ENCODE measurements at regions of chr7 and their contacts with region 1.

Region 1: GRCh38 chr7:139645572-139646523 is 122.4 kb downstream of the CLEC2L start:
- H3K4me3 Mint-ChIP-seq: no peak overlapping the region
- H3K27ac Mint-ChIP-seq: no peak overlapping the region
- H3K4me1 Mint-ChIP-seq: peaks cover 52% of the 10 kb centered on the region
- H3K27me3 Mint-ChIP-seq: peaks cover 3% of the 10 kb centered on the region

Region 2: GRCh38 chr7:139696552-139696951 is 50.7 kb after region 1 on chr7:
- intact Hi-C with region 1: loop called (anchors 5 kb)
- H3K4me3 Mint-ChIP-seq: no peak overlapping the region
- H3K27ac Mint-ChIP-seq: peak overlapping the region; percentile 28
- H3K4me1 Mint-ChIP-seq: peaks cover 59% of the 10 kb centered on the region
- H3K27me3 Mint-ChIP-seq: no peaks in the 10 kb centered on the region

Region 3: DNA sequence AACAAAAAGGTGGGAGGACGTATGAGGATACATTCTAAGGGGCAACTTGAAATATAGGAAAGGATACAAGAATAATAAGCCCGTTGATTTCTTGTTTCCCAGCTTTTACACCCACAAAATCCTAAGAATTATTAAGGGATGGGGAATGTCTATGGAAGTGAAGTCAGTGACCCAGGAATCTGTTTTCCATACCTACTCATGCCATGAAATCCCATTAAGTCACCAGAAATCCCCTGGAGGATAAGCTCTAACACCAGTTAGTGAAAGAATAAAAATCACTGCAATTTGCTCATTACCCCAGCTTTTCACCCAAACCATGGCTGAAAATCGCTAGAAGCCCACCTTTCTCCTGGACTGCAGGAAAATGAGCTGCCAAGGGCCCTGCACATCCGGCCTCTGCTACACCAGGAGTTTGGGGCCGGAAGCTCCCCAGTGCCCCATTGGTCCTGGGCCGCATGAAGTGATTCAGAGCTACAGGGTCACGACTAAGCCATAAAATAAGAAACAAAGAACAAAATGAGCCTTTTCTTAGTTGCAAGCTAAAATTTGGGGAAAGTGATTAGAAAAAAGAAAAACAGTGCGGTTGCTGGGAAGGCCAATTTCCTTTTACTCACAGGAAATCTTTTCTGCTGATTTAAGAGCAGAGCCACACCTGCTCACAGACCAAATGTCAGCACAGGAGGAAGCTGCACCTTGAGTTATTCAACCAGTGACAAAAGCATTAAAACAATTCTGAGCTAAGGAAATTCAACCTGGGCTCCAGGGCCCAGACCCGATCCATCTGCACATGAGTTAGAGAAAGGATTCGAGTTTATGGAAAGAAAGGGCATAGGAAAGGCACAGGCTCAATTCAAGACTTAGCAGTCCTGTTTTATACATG is 91.6 kb after region 1 on chr7:
- intact Hi-C with region 1: no loop called
- H3K4me3 Mint-ChIP-seq: no peak overlapping the region
- H3K27ac Mint-ChIP-seq: no peak overlapping the region
- H3K4me1 Mint-ChIP-seq: peaks cover 42% of the 10 kb centered on the region
- H3K27me3 Mint-ChIP-seq: no peaks in the 10 kb centered on the region

Region 4: DNA sequence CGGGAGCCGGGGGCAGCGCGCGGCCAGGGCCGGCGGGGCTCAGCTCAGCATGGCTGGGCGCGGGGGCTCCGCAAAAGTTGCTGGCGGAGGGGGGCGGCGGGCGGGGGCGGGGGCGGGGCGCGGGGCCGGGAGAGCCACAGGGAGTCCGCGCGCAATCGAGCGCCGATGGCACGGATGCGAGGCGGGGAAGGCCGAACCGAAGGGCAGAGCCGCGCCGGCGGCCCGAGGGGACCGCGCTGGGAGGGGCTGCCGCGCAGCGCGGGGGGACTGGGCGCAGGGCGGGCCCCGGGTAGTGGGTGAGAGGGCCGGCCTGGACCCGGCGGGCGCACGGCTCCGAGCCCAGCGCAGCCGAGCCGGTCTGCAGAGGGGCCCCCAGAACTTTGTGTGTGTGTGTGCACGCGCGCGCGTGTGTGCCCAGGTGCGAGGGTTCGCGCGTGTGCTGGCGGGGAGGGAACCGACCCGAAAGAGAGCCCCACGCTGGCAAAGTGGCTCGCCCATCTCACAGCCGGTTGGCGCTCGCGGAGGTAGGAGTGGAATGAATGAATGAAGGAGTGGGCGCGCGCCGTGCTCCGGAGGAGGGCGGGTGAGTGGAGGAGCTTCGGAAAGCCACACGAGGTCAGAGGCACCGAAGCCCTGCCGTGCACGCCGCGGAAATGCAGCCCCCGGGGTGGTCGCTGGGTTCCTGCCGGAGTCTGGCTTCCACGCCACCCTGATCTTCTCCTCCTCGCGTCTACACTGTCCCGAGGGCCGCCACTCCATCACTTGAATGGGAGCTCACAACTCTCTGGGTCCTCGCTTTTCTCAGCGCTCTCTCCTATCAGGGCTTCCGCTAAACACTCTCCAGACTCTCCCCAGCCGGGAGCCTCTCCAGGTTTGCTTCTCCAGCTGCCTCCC is 132.3 kb after region 1 on chr7 and contains the start of gene HIPK2:
- intact Hi-C with region 1: loop called (anchors 2 kb)
- H3K4me3 Mint-ChIP-seq: peak within 1 kb of the TSS; percentile 97
- H3K27ac Mint-ChIP-seq: peak within 1 kb of the TSS; percentile 92
- H3K4me1 Mint-ChIP-seq: peaks cover 36% of the 10 kb centered on the region
- H3K27me3 Mint-ChIP-seq: peaks cover 28% of the 10 kb centered on the region

Region 5: DNA sequence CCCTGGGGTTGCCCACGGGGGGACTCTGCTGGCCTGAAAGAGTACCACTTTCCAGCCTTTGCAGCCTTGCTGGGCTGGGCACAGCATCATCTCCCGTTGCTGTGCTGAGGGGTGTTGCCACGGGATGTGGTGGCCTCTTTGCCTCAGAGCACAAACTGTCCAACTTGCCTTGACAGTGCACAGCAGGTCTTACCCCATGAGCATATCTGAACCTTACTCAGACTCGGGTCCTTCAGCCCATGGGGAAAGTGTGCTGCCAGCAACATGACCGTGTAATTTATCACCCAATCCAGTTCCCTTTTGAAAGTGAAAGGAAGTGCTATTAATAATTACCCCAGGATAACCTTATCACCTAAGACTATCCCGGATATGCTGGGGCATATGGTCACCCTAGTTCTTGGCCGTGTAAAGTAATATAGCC is 230.0 kb after region 1 on chr7:
- intact Hi-C with region 1: loop called (anchors 10 kb)
- H3K4me3 Mint-ChIP-seq: no peak overlapping the region
- H3K27ac Mint-ChIP-seq: no peak overlapping the region
- H3K4me1 Mint-ChIP-seq: peaks cover 64% of the 10 kb centered on the region
- H3K27me3 Mint-ChIP-seq: no peaks in the 10 kb centered on the region

Region 6: DNA sequence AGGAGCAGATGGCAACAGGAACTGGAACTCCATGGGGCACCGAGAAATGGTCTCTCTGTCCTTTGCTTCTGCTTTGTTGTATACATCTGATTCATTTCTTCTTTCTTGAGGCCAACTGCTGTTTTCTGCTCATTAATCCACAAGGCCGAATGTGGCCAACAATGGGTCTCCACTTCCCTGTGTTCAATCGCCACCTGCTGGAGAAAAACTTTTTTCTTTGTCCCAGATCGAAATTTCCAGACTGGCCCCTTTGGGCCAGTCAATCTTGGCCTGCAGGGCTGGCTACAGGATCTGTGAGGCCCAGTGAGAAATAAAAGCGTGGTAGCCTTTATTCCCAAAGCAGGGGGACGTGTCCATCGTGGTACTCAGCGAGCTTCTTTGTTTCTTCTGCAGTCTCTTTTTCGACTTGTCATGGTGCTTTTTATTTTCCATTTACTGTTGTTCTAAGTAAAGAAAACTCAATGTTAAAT is 358.1 kb after region 1 on chr7:
- intact Hi-C with region 1: loop called (anchors 2 kb)
- H3K4me3 Mint-ChIP-seq: no peak overlapping the region
- H3K27ac Mint-ChIP-seq: no peak overlapping the region
- H3K4me1 Mint-ChIP-seq: peaks cover 20% of the 10 kb centered on the region
- H3K27me3 Mint-ChIP-seq: no peaks in the 10 kb centered on the region

Measured in dendritic cell treated with granulocyte-macrophage colony-stimulating factor and Interleukin-4, amounts not matched to agents 40 ng/mL and 50 ng/mL, for 4 days (primary cell).